Activated CD4-positive, alpha-beta T cell treated with anti-CD3 and anti-CD28 coated beads for 36 hours (primary cell): ENCODE measurements at regions of chr1 and their contacts with region 1.

Region 1: DNA sequence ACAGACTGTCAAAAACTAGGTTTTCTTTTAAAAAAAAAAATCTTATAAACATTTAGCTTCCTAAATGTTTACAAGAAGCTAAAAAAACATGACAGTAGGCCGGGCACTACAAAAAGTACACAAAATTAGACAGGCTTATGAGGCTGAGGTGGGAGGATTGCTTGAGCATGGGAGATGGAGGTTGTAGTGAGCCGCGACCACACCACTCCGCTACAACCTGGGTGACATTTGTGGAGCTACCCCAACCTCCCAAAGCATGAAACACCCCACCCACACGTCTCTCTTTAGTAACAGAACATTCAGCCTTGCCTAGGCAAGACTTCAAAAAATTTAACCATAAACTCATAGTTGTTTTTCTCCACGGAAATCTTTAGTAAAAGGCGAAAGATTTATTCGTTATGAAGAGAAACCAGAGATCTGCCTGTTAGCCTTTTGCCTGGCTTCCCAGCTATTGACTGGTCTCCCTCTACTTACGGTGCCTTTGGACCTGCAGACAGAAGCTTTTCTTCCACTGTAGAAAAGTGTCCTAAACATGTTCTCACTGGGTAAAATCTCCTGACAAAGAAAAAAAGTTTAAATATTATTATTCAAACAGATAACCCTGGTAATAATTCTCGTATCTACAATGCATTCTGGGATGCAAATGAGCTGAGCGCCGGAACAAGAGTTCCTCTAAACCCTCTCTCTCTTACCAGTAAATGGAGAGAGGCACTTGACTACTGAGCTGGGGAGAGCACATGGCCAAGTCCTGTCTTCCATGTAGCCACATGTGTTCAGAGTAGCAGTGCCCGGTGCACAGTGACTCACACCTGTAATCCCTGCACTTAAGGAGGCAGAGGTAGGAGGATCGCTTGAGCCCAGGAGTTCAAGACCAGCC is 9.2 kb downstream of the RNU5D-1 start:
- DNase-seq: peak; percentile 89
- ATAC-seq: peak; percentile 85
- H3K4me3 Mint-ChIP-seq: peak overlapping the region; percentile 66
- H3K27ac Mint-ChIP-seq: peak overlapping the region; percentile 96
- H3K4me1 Mint-ChIP-seq: peaks cover 80% of the 10 kb centered on the region
- H3K27me3 Mint-ChIP-seq: no peaks in the 10 kb centered on the region

Region 2: GRCh38 chr1:44696789-44697345 is 24.9 kb before region 1 on chr1:
- CTCF ChIA-PET with region 1: interaction called, 3 read pairs
- POLR2A ChIA-PET with region 1: interaction called, 27 read pairs
- intact Hi-C with region 1: no loop called
- DNase-seq: peak; percentile 71
- ATAC-seq: peak; percentile 91
- H3K4me3 Mint-ChIP-seq: no peak overlapping the region
- H3K27ac Mint-ChIP-seq: peak overlapping the region; percentile 77
- H3K4me1 Mint-ChIP-seq: peaks cover 28% of the 10 kb centered on the region
- H3K27me3 Mint-ChIP-seq: no peaks in the 10 kb centered on the region

Region 3: GRCh38 chr1:44759077-44759476 is 37.4 kb after region 1 on chr1:
- CTCF ChIA-PET with region 1: no interaction called
- POLR2A ChIA-PET with region 1: interaction called, 10 read pairs
- intact Hi-C with region 1: no loop called
- DNase-seq: no peak
- ATAC-seq: no peak
- H3K4me3 Mint-ChIP-seq: no peak overlapping the region
- H3K27ac Mint-ChIP-seq: no peak overlapping the region
- H3K4me1 Mint-ChIP-seq: no peaks in the 10 kb centered on the region
- H3K27me3 Mint-ChIP-seq: no peaks in the 10 kb centered on the region

Region 4: GRCh38 chr1:44792783-44793714 is 71.3 kb after region 1 on chr1:
- CTCF ChIA-PET with region 1: interaction called, 4 read pairs
- POLR2A ChIA-PET with region 1: interaction called, 16 read pairs
- intact Hi-C with region 1: no loop called
- DNase-seq: peak; percentile 4
- ATAC-seq: no peak
- H3K4me3 Mint-ChIP-seq: no peak overlapping the region
- H3K27ac Mint-ChIP-seq: no peak overlapping the region
- H3K4me1 Mint-ChIP-seq: no peaks in the 10 kb centered on the region
- H3K27me3 Mint-ChIP-seq: no peaks in the 10 kb centered on the region

Region 5: GRCh38 chr1:44812822-44813543 is 91.3 kb after region 1 on chr1:
- CTCF ChIA-PET with region 1: interaction called, 7 read pairs
- POLR2A ChIA-PET with region 1: interaction called, 675 read pairs
- intact Hi-C with region 1: loop called in 1 of 2 experiments (anchors 2 kb)
- DNase-seq: no peak
- ATAC-seq: no peak
- H3K4me3 Mint-ChIP-seq: peak overlapping the region; percentile 87
- H3K27ac Mint-ChIP-seq: peak overlapping the region; percentile 25
- H3K4me1 Mint-ChIP-seq: peaks cover 73% of the 10 kb centered on the region
- H3K27me3 Mint-ChIP-seq: no peaks in the 10 kb centered on the region

Region 6: GRCh38 chr1:45339789-45340570 is 618.3 kb after region 1 on chr1 and contains the starts of genes MUTYH and TOE1:
- CTCF ChIA-PET with region 1: no interaction called
- POLR2A ChIA-PET with region 1: interaction called, 26 read pairs
- intact Hi-C with region 1: no loop called
- DNase-seq: peak; percentile 98
- ATAC-seq: peak; percentile 86
- H3K4me3 Mint-ChIP-seq: peak within 1 kb of the TSS; percentile 100
- H3K27ac Mint-ChIP-seq: peak within 1 kb of the TSS; percentile 100
- H3K4me1 Mint-ChIP-seq: peaks cover 27% of the 10 kb centered on the region
- H3K27me3 Mint-ChIP-seq: no peaks in the 10 kb centered on the region
- total RNA-seq, gene MUTYH: 48.6 to 53.7 TPM
- total RNA-seq, gene TOE1: 29.8 to 42.3 TPM